Activated CD4-positive, alpha-beta T cell treated with anti-CD3 and anti-CD28 coated beads, Interleukin-2, amount 10 ng/mL, durations not matched to agents 24 days and 14 days (primary cell): ENCODE measurements at regions of chr1 and their contacts with region 1.

Region 1: DNA sequence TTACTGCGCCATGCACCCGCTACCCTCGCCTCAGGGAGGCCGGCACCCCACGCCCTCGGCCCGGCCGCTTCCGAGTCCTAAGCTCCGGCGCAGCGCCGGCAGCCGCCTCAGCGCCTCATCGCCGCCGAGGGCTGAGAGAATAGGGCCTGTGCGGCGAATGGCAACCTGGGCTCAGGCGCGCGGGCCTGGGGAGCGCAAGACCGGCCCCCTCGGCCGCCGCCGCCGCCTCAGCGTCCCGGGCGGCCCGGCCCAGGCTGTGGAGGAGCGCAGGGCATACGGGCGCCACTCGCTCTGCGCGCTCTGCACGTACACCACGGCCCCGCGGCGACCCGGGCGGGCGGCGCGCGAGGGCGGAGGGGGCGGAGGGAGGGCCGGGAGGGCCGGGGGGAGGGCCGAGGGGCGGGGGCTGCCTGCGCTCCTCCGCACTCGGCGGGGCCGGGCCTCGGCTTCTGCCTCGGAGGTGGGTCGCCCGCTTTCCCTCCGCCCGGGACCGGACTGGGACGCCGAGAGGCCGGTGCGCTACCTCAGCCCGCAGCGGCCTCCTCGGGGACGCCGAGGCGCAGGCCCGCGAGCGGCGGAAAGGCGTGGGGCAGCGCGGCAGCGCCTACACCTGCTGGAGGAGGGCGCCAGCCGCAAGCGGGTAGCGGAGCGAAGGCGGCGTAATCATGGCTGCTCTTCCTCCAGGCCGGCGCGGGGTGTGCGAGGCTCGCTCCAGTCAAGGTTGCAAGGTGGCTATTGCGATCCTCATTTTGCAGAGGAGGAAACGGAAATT is at the start of gene EGLN1:
- DNase-seq: peak; percentile 94
- H3K4me3 Mint-ChIP-seq: peak within 1 kb of the TSS; percentile 98
- H3K27ac Mint-ChIP-seq: peak within 1 kb of the TSS; percentile 95
- H3K4me1 Mint-ChIP-seq: peaks cover 47% of the 10 kb centered on the region
- H3K27me3 Mint-ChIP-seq: peaks cover 25% of the 10 kb centered on the region
- total RNA-seq, gene EGLN1: 21.4 and 23.9 TPM in 2 replicates

Region 2: DNA sequence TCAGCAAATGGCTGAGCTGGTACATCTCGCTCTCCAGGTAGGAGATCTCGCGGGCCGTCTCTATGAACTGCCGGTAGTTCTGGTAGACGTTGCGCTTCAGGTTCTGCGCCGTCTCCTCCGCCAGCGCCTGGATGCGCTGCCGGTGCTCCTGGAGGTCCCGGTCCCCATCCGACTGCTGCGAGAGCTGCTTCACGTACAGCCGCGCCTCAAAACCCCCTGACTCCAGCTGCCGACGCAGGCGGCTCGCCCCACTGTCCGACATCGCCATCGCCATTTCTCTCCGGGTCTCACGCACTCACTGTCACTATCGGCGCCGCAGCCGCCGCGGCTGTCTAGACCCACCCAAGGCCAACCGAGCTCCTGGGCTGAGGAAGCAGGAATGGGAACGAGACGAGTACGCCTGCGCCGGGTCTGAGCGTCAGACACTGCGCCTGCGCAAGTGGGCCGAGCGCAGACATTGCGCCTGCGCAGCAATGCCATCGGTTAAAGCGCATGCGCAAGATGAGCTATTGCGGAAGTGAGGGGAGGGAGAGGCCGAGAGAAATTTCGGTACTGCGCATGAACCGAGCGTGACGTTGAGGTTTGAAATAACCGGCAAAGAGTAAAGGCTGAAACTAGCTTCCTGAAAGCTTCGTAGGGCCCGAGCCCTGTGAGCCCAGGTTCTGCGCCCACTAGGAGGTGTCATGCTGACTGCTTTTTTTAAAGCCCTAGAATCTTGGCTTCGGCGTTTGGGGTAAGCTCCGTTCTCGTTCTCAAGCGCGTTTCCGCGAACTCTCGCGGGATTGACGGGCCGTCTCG is 84.5 kb before region 1 on chr1 and contains the start of gene EXOC8:
- intact Hi-C with region 1: loop called (anchors 1 kb)
- DNase-seq: peak; percentile 100
- H3K4me3 Mint-ChIP-seq: peak within 1 kb of the TSS; percentile 95
- H3K27ac Mint-ChIP-seq: peak within 1 kb of the TSS; percentile 98
- H3K4me1 Mint-ChIP-seq: peaks cover 44% of the 10 kb centered on the region
- H3K27me3 Mint-ChIP-seq: peaks cover 3% of the 10 kb centered on the region
- total RNA-seq, gene EXOC8: 12.4 and 13.3 TPM in 2 replicates

Region 3: DNA sequence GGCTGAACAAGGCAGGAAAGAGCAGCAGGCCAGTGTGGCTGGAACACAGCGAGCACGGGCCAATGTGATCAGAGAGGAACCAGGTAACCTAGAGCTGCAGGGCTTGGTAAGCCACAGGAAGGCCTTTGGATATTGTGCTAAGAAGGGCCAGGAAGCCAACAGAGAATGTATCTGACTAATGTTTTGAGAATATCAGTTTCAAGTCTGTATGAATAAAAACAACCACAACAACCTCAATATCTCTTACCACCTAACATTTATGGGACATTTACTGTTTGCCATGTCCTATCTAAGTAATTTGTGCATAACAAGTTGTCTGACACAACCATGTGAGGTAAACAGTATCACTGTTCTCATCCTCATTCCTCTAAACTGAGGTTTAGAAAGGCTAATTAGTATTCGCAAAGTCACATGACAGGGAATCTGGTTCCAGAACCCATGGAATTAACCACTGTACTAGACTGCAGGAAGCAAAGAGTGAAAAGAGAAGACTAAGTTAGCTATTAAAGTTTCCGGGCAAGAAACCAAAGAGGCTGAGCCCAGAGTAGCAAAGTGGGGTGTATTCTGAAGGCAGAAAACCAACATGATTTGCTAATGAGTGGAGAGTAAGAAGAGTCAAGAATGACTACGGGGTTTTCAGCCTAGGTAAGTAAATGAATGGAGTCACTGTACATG is 45.2 kb before region 1 on chr1:
- intact Hi-C with region 1: loop called (anchors 1 kb)
- DNase-seq: peak; percentile 72
- H3K4me3 Mint-ChIP-seq: peak overlapping the region; percentile 17
- H3K27ac Mint-ChIP-seq: peak overlapping the region; percentile 76
- H3K4me1 Mint-ChIP-seq: peaks cover 28% of the 10 kb centered on the region
- H3K27me3 Mint-ChIP-seq: no peaks in the 10 kb centered on the region

Region 4: GRCh38 chr1:231432996-231433395 is 10.8 kb after region 1 on chr1:
- intact Hi-C with region 1: no loop called
- DNase-seq: no peak
- H3K4me3 Mint-ChIP-seq: no peak overlapping the region
- H3K27ac Mint-ChIP-seq: no peak overlapping the region
- H3K4me1 Mint-ChIP-seq: peaks cover 2% of the 10 kb centered on the region
- H3K27me3 Mint-ChIP-seq: peaks cover 36% of the 10 kb centered on the region

Region 5: DNA sequence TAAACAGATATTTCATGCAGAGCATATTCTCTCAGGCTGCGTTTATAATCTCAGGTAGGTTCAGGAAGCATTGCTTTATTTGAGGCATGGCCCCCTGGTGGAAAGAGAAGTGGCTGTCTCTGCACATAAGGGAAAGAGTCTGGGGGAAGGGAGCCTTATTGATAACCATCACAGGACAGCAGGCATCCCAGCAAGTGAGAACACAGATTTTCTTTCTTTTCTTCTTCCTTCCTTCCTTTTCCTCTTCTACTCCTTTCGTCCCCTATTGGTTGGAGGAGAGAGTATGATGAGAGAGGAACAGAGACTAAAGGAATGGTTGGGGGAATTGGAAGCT is 128.2 kb after region 1 on chr1:
- intact Hi-C with region 1: loop called (anchors 1 kb)
- DNase-seq: peak; percentile 74
- H3K4me3 Mint-ChIP-seq: no peak overlapping the region
- H3K27ac Mint-ChIP-seq: no peak overlapping the region
- H3K4me1 Mint-ChIP-seq: peaks cover 7% of the 10 kb centered on the region
- H3K27me3 Mint-ChIP-seq: no peaks in the 10 kb centered on the region